ENCODE measurements at regions of chr2 and their contacts with region 1.

Region 1: DNA sequence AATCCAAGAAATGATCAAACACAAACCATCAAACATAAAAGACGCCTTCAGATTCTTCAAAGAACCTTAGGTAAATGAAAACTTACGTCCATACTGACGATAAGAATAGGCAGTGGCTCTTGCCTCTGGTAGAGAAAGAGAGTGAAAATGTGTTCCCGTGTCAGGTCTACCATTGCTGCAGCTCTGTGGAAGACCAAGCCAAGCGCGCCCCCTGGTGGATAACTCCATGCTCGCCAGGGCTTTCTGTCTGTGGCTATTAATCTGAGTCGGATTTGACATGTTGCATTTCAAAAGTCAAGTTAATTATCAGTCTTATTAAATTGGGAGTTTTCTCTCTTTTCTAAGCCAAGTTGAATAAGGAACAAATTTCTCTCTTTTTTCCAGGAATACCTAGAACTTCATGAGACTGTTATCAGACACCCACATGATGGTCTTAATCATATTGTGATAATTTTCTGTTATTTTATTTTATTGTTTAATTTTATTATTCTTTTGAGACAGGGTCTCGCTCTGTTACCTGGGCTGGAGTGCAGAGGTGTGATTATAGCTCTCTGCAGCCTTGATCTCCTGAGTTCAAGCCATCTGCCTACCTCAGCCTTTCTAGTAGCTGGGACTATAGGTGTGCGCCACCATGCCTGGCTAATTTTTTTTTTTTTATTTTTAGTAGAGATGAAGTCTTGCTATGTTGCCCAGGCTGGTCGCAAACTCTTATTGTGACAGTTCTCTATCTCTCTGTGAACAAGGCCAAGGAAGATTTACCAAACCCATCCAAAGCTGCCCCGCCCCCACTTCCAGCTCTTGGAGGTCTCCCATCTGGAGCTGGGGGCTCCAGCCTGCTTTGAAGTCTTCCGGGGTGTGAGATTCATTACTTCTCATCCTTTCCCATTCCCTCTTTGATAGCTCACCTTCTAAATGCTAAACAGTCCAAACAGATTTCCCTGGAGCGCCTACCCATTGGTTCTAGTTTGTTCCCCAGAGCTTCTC is 15.8 kb upstream of the ZAP70 start:
- DNase-seq: peak; percentile 97
- H3K4me3 Mint-ChIP-seq: peak overlapping the region; percentile 12
- H3K27ac Mint-ChIP-seq: no peak overlapping the region
- H3K4me1 Mint-ChIP-seq: peaks cover 4% of the 10 kb centered on the region
- H3K27me3 Mint-ChIP-seq: no peaks in the 10 kb centered on the region

Region 2: GRCh38 chr2:97663965-97664635 is 33.4 kb before region 1 on chr2 and contains the start of gene ACTR1B:
- CTCF ChIA-PET with region 1: interaction called, 56 read pairs
- intact Hi-C with region 1: loop called (anchors 1 kb)
- DNase-seq: peak; percentile 98
- H3K4me3 Mint-ChIP-seq: peak within 1 kb of the TSS; percentile 93
- H3K27ac Mint-ChIP-seq: peak within 1 kb of the TSS; percentile 98
- H3K4me1 Mint-ChIP-seq: peaks cover 31% of the 10 kb centered on the region
- H3K27me3 Mint-ChIP-seq: no peaks in the 10 kb centered on the region
- total RNA-seq, gene ACTR1B: 103 to 104 TPM

Region 3: DNA sequence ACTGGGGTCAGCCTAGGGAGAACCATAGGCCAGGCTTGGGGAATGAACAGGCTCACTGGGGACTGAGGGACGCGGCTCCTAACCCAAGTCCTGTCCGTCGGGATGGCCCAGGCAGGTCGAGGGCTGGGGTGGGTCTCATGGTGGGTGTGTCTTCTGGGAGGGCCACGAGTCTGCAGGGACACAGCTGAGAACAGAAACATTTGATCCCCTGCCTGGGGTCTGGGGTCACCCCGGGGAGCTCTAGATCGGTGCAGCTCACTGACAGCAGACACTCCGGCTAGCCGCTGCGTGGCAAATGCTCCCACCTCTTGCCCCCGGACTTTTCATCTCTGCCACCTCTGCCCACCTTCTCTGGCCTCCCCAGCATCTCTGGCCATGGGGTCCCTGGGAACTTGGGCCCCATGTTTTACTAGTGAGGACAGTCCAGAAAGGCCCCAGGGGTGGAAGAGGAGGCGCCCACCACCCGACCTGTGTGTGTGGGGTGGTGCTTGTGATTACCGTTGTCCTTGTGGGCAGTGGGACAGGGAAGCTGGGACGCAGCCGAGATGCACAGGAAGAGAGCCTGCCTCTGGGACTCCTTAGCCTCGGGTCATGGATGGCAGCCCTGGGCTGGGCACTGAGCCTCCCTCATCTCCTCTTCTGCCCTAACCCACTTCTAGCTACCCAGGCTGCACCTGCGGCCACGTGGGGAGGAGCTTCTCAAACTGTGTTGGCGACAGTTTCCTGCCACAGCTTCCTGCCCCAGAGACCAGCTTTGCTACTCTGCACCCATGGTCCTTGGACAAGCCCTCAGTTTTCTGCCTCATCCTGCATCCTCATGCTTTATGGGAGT is 20.7 kb after region 1 on chr2:
- CTCF ChIA-PET with region 1: interaction called, 38 read pairs
- intact Hi-C with region 1: no loop called
- DNase-seq: peak; percentile 84
- H3K4me3 Mint-ChIP-seq: peak overlapping the region; percentile 85
- H3K27ac Mint-ChIP-seq: peak overlapping the region; percentile 95
- H3K4me1 Mint-ChIP-seq: peaks cover 71% of the 10 kb centered on the region
- H3K27me3 Mint-ChIP-seq: no peaks in the 10 kb centered on the region

Region 4: DNA sequence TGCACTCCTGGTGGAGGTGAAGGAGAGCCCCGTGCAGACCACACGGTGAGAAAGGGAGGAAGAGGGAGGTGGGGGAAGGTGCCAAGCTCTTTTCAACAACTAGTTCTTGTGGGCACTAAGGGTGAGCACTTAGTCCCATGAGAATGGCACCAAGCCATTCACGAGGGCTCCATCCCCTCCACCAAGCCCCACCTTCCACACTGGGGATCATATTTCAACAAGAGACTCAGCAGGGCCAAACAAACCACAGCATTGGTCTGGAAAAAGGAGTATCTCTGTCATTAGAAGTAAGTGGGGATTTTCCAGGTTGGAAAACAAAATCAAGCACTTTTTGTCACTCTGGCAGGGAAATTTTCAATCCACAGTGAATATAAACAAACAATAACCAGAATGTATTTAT is 54.2 kb after region 1 on chr2:
- CTCF ChIA-PET with region 1: interaction called, 34 read pairs
- intact Hi-C with region 1: loop called (anchors 1 kb)
- DNase-seq: no peak
- H3K4me3 Mint-ChIP-seq: no peak overlapping the region
- H3K27ac Mint-ChIP-seq: no peak overlapping the region
- H3K4me1 Mint-ChIP-seq: peaks cover 10% of the 10 kb centered on the region
- H3K27me3 Mint-ChIP-seq: no peaks in the 10 kb centered on the region